Dorsolateral prefrontal cortex (tissue), 120 donors: ENCODE measurements at regions of chr10 and their contacts with region 1.

Region 1: GRCh38 chr10:73772280-73773151 is 9.3 kb upstream of the CHCHD1 start:
- DNase-seq: peak; percentile 55 to 94 (median 75)
- H3K4me3 ChIP-seq: peak overlapping the region; percentile 62 to 97 (median 88)
- H3K27ac ChIP-seq: peak overlapping the region; percentile 72 to 100 (median 98)
- H3K27me3 ChIP-seq: no peaks in the 10 kb centered on the region
- CTCF ChIP-seq: peak in 29 of 56 donors; percentile 1 to 49 (median 15)

Region 2: GRCh38 chr10:73743905-73744663 is 28.4 kb before region 1 on chr10 and contains the start of gene SEC24C:
- intact Hi-C with region 1: loop called in 1 of 2 experiments (anchors 2 kb)
- DNase-seq: peak; percentile 94 to 97 (median 96)
- H3K4me3 ChIP-seq: peak within 1 kb of the TSS; percentile 55 to 100 (median 94)
- H3K27ac ChIP-seq: peak within 1 kb of the TSS; percentile 79 to 100 (median 96)
- H3K27me3 ChIP-seq: no peaks in the 10 kb centered on the region
- CTCF ChIP-seq: peak in 26 of 56 donors; percentile 3 to 47 (median 22)
- total RNA-seq, gene SEC24C: 55.3 to 85.9 (median 67.1) TPM

Region 3: DNA sequence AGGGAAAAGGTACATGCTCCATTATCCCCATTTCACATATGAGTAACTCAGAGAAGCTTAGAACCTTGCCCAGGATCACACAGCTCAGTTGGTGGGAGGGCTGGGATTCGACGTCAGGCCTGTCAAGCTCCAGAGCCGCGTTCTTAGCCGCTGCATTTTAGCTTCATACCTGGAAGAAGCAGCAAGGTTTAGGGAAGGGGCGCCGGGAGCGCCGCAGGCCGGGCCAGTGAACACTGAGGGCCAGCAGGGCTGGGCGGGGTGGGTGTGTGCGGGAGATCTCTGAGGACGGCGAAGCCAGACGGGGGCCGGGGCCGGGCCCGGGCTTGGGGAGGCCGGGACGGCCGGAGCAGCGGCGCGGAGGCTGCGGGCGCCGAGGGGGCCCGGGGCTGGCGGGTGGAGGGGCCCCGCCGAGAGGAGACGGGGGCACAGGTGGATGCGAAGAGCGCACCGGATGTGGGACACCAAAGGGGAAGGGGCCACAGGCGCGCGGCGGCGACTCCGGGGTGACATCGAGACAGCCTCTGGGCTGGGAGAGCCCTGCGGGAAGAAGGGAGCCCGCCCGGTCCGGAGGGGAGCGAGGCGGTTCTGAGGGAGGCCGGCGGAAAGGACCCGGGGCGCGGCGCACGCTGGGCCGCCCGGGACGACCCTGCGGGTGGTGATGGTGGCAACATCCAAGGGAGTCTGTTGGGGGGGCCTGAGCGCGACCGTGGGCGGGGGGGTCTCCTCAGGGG is 38.4 kb after region 1 on chr10:
- intact Hi-C with region 1: loop called in 1 of 2 experiments (anchors 2 kb)
- DNase-seq: peak in 4 of 10 donors; percentile 19 to 53 (median 22)
- H3K4me3 ChIP-seq: peak overlapping the region; percentile 64 to 98 (median 87)
- H3K27ac ChIP-seq: peak overlapping the region; percentile 65 to 96 (median 91)
- H3K27me3 ChIP-seq: no peaks in the 10 kb centered on the region
- CTCF ChIP-seq: no peak

Region 4: DNA sequence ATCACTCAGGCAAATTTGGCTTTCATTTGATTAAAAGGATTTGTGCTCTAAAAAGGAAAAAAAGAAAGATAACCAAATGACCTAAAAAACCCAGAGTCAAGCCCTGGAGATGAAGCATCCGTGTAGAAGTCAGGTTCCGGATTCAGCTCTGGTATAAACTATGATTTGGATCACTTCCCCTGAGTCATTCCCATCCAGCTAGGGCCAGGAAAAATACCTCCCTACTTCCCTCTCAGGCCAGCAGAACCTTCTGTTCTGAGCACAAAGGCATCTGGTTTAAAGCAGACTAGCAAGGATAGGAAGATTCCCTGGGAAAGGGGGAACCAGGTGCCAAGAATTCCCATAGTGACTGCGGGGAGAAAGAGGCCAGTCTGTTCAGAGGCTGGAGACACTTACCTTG is 64.6 kb after region 1 on chr10:
- intact Hi-C with region 1: no loop called
- DNase-seq: peak in 1 of 10 donors; percentile 29
- H3K4me3 ChIP-seq: no peak overlapping the region
- H3K27ac ChIP-seq: peak overlapping the region in 52 of 59 donors; percentile 5 to 87 (median 72)
- H3K27me3 ChIP-seq: no peaks in the 10 kb centered on the region
- CTCF ChIP-seq: no peak

Region 5: GRCh38 chr10:73848821-73849489 is 76.4 kb after region 1 on chr10:
- intact Hi-C with region 1: no loop called
- DNase-seq: peak; percentile 76 to 91 (median 86)
- H3K4me3 ChIP-seq: peak overlapping the region in 1 of 59 donors; percentile 3
- H3K27ac ChIP-seq: peak overlapping the region in 50 of 59 donors; percentile 4 to 90 (median 70)
- H3K27me3 ChIP-seq: no peaks in the 10 kb centered on the region
- CTCF ChIP-seq: peak; percentile 94 to 100 (median 100)